Heart left ventricle (tissue), 16 donors: ENCODE measurements at regions of chr4 and their contacts with region 1.

Region 1: GRCh38 chr4:114077610-114078009 is 98.2 kb upstream of the ARSJ start:
- DNase-seq: no peak
- ATAC-seq: no peak
- H3K4me3 ChIP-seq: no peak overlapping the region
- H3K27ac ChIP-seq: no peak overlapping the region
- H3K4me1 ChIP-seq: no peaks in the 10 kb centered on the region
- H3K27me3 ChIP-seq: no peaks in the 10 kb centered on the region
- CTCF ChIP-seq: no peak
- POLR2A ChIP-seq: no peak

Region 2: DNA sequence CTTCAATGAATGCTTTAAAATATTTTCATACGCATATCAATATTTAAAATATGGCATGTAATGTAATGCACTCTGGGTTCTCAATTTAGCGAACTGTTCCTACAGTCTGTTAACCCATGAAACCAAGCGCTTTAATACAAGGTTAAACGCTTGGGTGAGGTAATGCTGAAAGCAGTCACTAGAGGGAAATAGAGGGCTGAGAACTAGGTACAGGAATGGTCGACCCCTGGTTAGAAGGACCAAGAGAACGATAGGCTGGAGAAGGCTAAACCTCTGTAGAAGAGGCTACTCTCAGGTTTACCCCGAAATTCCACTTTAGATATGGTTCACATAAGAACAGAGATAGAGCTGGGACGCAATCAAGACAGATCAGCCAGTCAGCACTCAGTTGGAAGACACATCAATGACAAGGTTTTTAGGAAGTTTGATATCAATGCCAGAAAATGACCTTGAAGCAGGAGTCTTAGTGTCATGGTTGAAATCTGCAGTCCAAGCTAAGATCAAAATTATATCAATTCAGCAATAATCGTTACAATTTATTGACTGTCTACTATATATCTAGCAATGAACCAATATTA is 125.1 kb before region 1 on chr4:
- intact Hi-C with region 1: loop called in 5 of 10 experiments (anchors 5 to 10 kb)
- DNase-seq: no peak
- ATAC-seq: peak in 3 of 4 donors; percentile 61 to 80 (median 70)
- H3K4me3 ChIP-seq: no peak overlapping the region
- H3K27ac ChIP-seq: no peak overlapping the region
- H3K4me1 ChIP-seq: peaks cover 0 to 18% (median 7%) of the 10 kb centered on the region in 12 donors
- H3K27me3 ChIP-seq: no peaks in the 10 kb centered on the region
- CTCF ChIP-seq: peak; percentile 45 to 68 (median 54)
- POLR2A ChIP-seq: no peak